ENCODE measurements at regions of chr17 and their contacts with region 1.

Region 1: DNA sequence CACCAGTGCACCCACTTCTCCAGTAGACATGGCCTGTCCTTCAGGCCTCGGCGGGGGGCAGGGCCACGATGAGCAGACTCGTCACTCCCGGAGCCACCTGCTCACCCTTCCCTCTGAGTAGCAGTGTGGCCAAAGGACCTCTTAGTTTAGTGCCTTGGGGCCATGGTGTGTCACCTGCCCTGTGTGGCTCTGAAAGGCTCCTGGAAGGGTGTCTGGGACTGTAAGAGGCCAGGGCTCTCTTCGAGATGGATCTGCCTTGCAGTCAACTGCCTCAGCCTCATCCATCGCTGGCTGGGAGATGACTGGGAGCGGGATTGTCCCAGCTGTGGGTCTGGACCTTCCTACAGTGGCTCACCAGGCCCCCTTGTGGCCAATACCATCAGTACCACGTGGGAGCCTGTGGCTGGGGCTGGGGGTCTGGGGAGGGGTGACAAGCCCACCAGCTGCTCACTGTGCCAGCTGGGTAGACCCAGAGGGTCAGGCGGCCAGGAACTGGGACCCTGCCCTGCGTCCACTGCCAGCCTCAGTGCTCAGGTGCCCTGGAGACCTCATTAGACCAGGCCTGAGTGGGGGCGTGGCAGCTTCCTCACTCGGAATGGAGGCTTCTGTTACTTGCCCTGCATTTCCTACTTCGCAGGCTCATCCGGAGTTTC is 133.4 kb downstream of the OR1D5 start:
- DNase-seq: peak in 1 of 2 experiments; percentile 49
- H3K4me3 ChIP-seq: no peak overlapping the region
- H3K27ac ChIP-seq: no peak overlapping the region
- H3K4me1 ChIP-seq: no peaks in the 10 kb centered on the region; the same call in 1 of the 2 replicates
- H3K27me3 ChIP-seq: no peaks in the 10 kb centered on the region
- CTCF ChIP-seq: peak; percentile 96

Region 2: DNA sequence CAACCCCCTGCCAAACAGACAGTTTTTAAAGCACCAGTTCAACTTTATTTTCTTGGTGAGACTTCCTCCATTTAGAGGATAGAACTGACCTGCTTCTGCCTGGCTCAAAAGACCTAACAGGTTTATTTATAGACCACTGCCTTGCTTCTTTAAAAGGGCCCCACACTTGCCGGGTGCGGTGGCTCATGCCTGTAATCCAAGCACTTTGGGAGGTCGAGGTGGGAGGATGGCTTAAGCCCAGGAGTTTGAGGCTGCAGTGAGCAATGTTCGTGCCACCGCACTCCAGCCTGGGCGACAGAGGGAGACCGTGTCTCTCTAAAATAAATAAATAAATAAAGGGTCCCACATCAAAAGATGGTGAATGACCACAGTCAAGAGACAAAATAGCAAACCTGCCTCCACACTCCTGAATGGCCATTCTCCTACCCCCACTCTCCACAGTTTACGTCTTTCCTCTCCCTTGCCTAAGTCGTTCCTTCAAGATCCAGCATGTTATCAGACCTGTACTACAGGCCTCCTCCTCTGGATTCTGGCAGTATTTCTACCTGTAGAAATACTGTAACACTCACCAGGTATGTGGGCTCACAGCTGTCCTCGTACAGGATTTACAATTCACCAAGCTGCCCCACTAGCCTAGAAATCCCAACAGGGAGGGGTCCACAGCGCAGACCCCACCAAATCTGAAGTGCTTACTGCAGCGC is 722.0 kb before region 1 on chr17:
- CTCF ChIA-PET with region 1: no interaction called
- POLR2A ChIA-PET with region 1: no interaction called
- intact Hi-C with region 1: no loop called
- DNase-seq: no peak
- H3K4me3 ChIP-seq: no peak overlapping the region
- H3K27ac ChIP-seq: no peak overlapping the region
- H3K4me1 ChIP-seq: peaks cover 6% of the 10 kb centered on the region
- H3K27me3 ChIP-seq: no peaks in the 10 kb centered on the region
- CTCF ChIP-seq: no peak

Region 3: DNA sequence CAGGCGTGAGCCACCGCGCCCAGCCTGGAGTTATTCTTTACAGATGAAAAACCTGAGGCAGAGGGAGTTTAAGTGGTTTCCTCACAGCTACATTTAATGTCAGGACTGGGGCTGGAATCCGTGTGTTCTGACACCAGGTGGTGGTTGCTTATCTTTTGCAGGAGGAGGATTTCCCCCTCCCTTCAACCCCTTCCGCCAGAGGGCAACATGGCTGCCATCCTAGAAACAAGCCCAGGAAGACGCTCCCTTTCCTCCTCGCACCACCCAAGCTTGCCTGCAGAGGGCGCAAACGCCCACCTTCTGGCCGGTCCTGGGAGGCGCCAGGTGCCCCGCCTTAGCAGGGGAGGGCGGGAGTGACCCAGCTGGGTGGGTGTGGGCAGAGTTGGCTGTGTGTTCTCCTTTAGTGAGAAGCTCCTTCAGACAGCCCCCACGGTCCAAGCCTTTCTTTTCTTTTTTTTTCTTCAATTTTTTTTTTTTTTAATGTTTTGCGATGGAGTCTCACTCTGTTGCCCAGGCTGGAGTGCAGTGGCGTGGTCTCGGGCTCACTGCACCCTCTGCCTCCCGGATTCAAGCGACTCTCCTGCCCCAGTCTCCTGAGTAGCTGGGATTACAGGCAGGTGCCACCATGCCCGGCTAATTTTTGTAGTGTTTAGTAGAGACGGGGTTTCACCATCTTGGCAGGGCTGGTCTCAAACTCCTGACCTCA is 143.7 kb before region 1 on chr17:
- CTCF ChIA-PET with region 1: no interaction called
- POLR2A ChIA-PET with region 1: no interaction called
- intact Hi-C with region 1: loop called (anchors 5 kb)
- DNase-seq: peak; percentile 68 to 97
- H3K4me3 ChIP-seq: no peak overlapping the region
- H3K27ac ChIP-seq: no peak overlapping the region
- H3K4me1 ChIP-seq: no peaks in the 10 kb centered on the region
- H3K27me3 ChIP-seq: peaks cover 24% of the 10 kb centered on the region
- CTCF ChIP-seq: peak; percentile 87

Region 4: GRCh38 chr17:2828397-2829038 is 101.5 kb before region 1 on chr17:
- CTCF ChIA-PET with region 1: no interaction called
- POLR2A ChIA-PET with region 1: interaction called, 3 read pairs
- intact Hi-C with region 1: loop called (anchors 1 kb)
- DNase-seq: peak in 1 of 2 experiments; percentile 85
- H3K4me3 ChIP-seq: no peak overlapping the region
- H3K27ac ChIP-seq: no peak overlapping the region
- H3K4me1 ChIP-seq: no peaks in the 10 kb centered on the region
- H3K27me3 ChIP-seq: 0 out of 2 replicates have a peak, but pooled peaks cover 3% of the 10 kb centered on the region
- CTCF ChIP-seq: peak; percentile 93

Region 5: GRCh38 chr17:2844416-2844815 is 85.6 kb before region 1 on chr17:
- CTCF ChIA-PET with region 1: interaction called, 7 read pairs
- POLR2A ChIA-PET with region 1: no interaction called
- intact Hi-C with region 1: loop called (anchors 2 kb)
- DNase-seq: peak in 1 of 2 experiments; percentile 49
- H3K4me3 ChIP-seq: no peak overlapping the region
- H3K27ac ChIP-seq: no peak overlapping the region
- H3K4me1 ChIP-seq: 0 out of 2 replicates have a peak, but pooled peaks cover 9% of the 10 kb centered on the region
- H3K27me3 ChIP-seq: no peaks in the 10 kb centered on the region
- CTCF ChIP-seq: no peak

Region 6: DNA sequence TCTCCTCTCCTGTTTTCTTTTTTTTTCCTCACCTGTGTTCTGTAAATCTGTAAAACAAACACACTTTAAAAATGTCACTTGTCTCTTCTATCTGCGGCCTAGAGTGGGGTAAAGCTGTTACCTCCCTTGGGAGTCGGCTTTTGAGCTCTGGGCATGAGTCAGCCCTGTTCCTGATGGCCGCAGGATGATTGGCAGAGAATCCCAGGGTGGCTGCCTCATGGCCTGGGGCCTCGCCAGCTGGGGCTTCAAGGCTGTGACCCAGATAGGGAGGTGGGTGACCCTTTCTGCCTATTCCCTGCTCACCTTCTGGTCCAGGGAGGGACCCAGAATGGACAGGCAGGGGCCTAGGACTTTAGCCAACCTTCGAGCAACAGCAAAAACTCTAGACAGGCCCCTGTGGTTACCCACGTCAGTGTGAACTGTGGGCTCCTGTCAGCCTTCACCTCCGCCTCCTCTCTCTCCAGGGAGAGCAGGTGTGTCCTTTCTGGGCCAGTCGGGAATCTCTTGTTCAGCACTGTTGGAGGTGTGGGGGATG is 46.4 kb before region 1 on chr17:
- CTCF ChIA-PET with region 1: no interaction called
- POLR2A ChIA-PET with region 1: no interaction called
- intact Hi-C with region 1: no loop called
- DNase-seq: peak; percentile 42 to 72
- H3K4me3 ChIP-seq: no peak overlapping the region
- H3K27ac ChIP-seq: no peak overlapping the region
- H3K4me1 ChIP-seq: peaks cover 11% of the 10 kb centered on the region
- H3K27me3 ChIP-seq: no peaks in the 10 kb centered on the region
- CTCF ChIP-seq: no peak

Region 7: GRCh38 chr17:2965563-2966235 is 35.7 kb after region 1 on chr17:
- CTCF ChIA-PET with region 1: no interaction called
- POLR2A ChIA-PET with region 1: interaction called, 25 read pairs
- intact Hi-C with region 1: no loop called
- DNase-seq: peak; percentile 89 to 91
- H3K4me3 ChIP-seq: peak overlapping the region; percentile 40; the same call in 1 of the 2 replicates
- H3K27ac ChIP-seq: peak overlapping the region; percentile 84
- H3K4me1 ChIP-seq: peaks cover 35% of the 10 kb centered on the region
- H3K27me3 ChIP-seq: no peaks in the 10 kb centered on the region
- CTCF ChIP-seq: no peak

Region 8: GRCh38 chr17:3167574-3167973 is 237.6 kb after region 1 on chr17:
- CTCF ChIA-PET with region 1: no interaction called
- POLR2A ChIA-PET with region 1: no interaction called
- intact Hi-C with region 1: no loop called
- DNase-seq: no peak
- H3K4me3 ChIP-seq: no peak overlapping the region
- H3K27ac ChIP-seq: no peak overlapping the region
- H3K4me1 ChIP-seq: no peaks in the 10 kb centered on the region
- H3K27me3 ChIP-seq: peaks cover 55% of the 10 kb centered on the region
- CTCF ChIP-seq: no peak

Measured in PC-9 (cell line).